ENCODE measurements at regions of chr12 and their contacts with region 1.

Region 1: DNA sequence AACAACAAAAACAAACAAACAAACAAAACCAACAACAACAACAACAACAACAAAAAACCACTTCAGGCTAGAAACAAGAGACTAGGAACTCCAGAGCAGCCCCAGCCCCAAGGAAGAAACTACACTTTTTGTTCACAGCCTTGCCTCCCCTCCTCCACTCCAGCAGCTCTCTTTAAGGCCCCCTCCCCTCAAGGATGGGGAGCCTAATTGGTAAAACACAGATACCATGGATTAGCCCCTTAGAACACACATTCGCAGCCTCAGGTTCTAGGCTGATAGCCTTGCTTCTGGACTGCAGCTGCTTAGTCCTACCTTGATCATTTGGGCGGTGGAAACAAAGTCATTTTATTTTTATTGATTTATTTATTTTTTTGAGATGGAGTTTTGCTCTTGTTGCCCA is 11.9 kb upstream of the AVIL start:
- DNase-seq: no peak
- H3K4me3 ChIP-seq: no peak overlapping the region
- H3K27ac ChIP-seq: peak overlapping the region in 1 of 3 donors; percentile 26
- H3K4me1 ChIP-seq: peaks cover 41 to 66% of the 10 kb centered on the region in 2 donors
- H3K27me3 ChIP-seq: no peaks in the 10 kb centered on the region
- CTCF ChIP-seq: no peak
- POLR2A ChIP-seq: no peak

Region 2: DNA sequence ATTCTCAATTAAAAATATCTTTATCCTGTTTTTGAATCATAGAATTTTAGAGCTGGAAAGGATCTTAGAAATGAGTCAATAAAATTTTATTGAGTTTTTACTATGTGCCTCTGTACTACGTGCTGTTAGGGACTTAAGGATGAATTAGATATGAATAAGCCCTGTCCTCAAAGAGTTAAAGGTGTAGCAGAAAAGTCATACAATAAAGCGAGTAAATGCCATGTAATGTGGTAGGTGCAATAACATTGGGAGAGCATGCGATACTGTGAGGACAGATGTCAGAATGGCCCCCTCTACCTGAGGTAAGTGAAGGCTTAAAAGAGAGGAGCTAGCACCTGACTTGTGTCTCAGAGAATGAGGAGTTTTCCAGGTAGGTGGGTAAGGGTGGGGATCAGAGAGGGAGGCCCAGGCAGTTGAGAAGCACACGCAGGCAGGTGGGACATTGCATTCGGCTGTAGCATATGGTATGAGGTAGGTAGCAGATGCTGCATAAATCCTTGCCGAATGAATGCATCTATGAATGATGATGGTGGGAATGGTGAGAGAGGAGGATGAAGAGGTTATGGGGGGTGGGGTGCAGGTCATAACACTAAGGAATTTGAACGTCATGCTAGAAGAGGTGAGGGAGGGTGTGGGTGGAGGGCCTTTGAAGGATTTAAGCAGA is 75.6 kb after region 1 on chr12:
- intact Hi-C with region 1: loop called (anchors 2 kb)
- DNase-seq: no peak
- H3K4me3 ChIP-seq: no peak overlapping the region
- H3K27ac ChIP-seq: no peak overlapping the region
- H3K4me1 ChIP-seq: peaks cover 11 to 12% of the 10 kb centered on the region in 2 donors
- H3K27me3 ChIP-seq: no peaks in the 10 kb centered on the region
- CTCF ChIP-seq: no peak
- POLR2A ChIP-seq: no peak